ENCODE measurements at regions of chr20 and their contacts with region 1.

Region 1: DNA sequence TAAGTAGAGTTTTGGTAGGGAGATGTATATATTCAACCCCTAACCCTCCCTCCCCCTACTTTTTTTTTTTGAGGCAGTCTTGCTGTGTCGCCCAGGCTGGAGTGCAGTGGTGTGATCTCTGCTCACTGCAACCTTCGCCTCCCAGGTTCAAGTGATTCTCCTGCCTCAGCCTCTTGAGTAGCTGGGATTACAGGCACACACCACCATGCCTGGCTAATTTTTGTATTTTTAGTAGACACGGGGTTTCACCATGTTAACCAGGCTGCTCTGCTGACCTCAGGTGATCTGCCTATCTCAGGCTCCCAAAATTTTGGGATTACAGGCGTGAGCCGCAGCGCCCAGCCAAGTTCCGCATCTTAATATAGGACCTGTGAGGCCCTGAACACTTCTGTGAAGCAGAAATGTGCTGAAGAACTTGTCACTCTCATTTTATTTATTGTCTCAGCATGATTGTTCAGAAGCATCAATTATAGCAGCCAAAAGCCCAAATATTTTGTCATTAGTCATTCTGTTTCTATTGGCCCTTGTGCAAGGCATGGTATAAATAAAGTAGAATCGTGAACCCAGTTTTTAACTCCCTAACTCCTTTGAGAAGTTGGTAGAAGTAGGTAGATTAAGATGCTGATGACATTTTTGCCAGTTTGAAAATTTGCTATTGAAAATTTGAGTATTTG is 19.4 kb downstream of the DSTN start:
- DNase-seq: no peak
- H3K4me3 ChIP-seq: no peak overlapping the region
- H3K27ac ChIP-seq: 0 out of 2 replicates have a peak overlapping the region, but pooled peaks have one; percentile 6
- H3K4me1 ChIP-seq: peaks cover 24% of the 10 kb centered on the region
- H3K27me3 ChIP-seq: no peaks in the 10 kb centered on the region
- CTCF ChIP-seq: no peak

Region 2: DNA sequence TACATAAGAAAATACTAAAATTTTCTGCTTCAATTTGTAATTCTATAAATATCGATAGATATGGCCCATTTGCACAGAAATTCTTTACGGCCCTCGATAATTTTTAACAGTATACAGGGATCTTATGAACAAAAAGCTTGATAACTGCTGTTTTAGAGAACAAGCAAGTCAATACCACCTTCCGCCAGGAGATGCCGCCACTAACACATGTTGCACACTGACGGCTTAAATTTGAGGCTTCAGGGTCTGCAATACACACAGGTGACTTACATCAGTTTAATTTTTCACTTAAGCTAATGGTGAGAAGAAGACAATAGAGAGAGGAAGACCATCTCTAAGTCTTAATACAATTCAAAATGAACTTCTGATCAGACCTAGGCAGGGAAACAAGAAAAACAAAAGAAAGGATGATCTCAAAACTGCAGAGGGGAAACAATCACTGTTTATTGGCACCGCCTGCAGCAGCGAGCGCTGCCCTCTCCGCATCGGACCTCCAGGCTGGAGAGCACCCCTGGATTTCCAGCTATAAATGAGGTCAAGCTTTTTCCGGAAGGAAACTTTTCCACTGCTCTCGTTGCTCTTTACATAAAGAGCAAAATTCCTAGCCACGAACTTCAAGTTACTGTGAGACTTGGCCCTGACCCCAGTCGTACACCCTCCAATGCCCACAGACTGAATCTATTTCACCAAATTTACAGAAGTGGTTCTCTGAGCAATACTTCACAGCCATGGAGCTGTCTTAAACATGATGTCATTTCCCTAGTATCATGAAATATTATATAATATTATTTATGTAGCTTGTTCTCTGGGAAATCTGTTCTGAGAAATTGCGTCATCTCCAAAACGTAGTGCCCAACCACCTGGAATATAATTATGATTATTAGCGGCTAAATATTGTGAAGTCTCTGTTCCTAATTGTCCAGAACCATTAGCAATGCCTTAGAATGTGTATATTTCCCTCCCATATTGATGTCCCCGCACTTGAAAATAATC is 787.1 kb before region 1 on chr20:
- CTCF ChIA-PET with region 1: no interaction called
- POLR2A ChIA-PET with region 1: no interaction called
- intact Hi-C with region 1: no loop called
- DNase-seq: peak in 1 of 2 experiments; percentile 64
- H3K4me3 ChIP-seq: no peak overlapping the region
- H3K27ac ChIP-seq: no peak overlapping the region
- H3K4me1 ChIP-seq: no peaks in the 10 kb centered on the region
- H3K27me3 ChIP-seq: peaks cover 82% of the 10 kb centered on the region
- CTCF ChIP-seq: peak; percentile 88

Region 3: GRCh38 chr20:17059465-17059864 is 529.8 kb before region 1 on chr20:
- CTCF ChIA-PET with region 1: no interaction called
- POLR2A ChIA-PET with region 1: no interaction called
- intact Hi-C with region 1: no loop called
- DNase-seq: no peak
- H3K4me3 ChIP-seq: no peak overlapping the region
- H3K27ac ChIP-seq: no peak overlapping the region
- H3K4me1 ChIP-seq: no peaks in the 10 kb centered on the region
- H3K27me3 ChIP-seq: no peaks in the 10 kb centered on the region
- CTCF ChIP-seq: no peak

Region 4: DNA sequence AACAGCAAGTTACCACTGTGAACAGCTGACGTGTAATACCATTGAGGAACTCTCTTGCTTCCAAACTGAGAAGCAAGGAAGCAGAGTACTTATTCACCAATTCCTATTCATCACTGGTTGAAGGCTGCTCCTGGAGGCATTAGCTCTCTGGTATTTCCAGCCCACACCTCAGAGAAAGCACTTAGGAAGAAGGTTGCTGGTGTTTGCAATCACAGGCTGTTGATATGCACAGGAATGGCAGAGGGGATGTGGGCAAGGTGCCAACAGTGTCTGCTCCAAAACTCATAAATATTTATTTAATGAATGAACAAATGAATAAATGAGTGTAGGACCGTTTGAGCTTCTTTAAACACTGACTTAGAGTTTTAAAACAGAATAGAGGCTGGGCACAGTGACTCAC is 99.7 kb after region 1 on chr20:
- CTCF ChIA-PET with region 1: no interaction called
- POLR2A ChIA-PET with region 1: interaction called, 17 read pairs
- intact Hi-C with region 1: no loop called
- DNase-seq: no peak
- H3K4me3 ChIP-seq: no peak overlapping the region
- H3K27ac ChIP-seq: no peak overlapping the region
- H3K4me1 ChIP-seq: no peaks in the 10 kb centered on the region
- H3K27me3 ChIP-seq: peaks cover 41% of the 10 kb centered on the region
- CTCF ChIP-seq: no peak

Region 5: DNA sequence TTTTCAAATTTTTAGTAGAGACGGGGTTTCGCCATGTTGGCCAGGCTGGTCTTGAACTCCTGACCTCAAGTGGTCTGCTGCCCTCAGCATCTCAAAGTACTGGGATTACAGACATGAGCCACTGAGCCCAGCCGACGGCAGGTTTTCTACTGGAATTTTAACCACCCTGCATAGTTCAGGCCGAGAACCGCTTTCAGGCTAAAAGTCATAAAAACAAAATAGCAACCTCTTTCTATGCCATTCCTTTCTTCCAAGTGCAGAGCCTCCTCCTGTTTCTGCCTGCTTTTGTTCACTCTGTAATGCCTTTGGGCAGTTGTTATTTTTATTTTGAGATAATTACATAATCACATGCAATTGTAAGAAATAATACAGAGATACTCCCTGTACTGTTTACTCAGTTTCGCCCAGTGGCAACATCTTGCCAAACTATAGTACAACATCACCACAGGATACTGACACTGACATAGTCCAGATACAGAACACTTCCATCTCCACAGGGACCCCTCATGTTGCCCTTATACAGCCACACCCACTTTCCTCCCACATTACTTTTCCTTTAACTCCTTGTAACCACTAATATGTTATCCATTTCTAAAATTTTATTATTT is 170.0 kb after region 1 on chr20:
- CTCF ChIA-PET with region 1: no interaction called
- POLR2A ChIA-PET with region 1: no interaction called
- intact Hi-C with region 1: no loop called
- DNase-seq: no peak
- H3K4me3 ChIP-seq: no peak overlapping the region
- H3K27ac ChIP-seq: no peak overlapping the region
- H3K4me1 ChIP-seq: peaks cover 11% of the 10 kb centered on the region
- H3K27me3 ChIP-seq: peaks cover 11% of the 10 kb centered on the region; the same call in 1 of the 2 replicates
- CTCF ChIP-seq: no peak